Activated CD4-positive, alpha-beta T cell treated with anti-CD3 and anti-CD28 coated beads, Interleukin-2, amount 10 ng/mL, durations not matched to agents 24 days and 14 days (primary cell): ENCODE measurements at regions of chr7 and their contacts with region 1.

Region 1: GRCh38 chr7:137898839-137899721 is 52.3 kb upstream of the DGKI start:
- DNase-seq: peak; percentile 93
- H3K4me3 Mint-ChIP-seq: peak overlapping the region; percentile 62
- H3K27ac Mint-ChIP-seq: peak overlapping the region; percentile 76
- H3K4me1 Mint-ChIP-seq: peaks cover 28% of the 10 kb centered on the region
- H3K27me3 Mint-ChIP-seq: no peaks in the 10 kb centered on the region

Region 2: DNA sequence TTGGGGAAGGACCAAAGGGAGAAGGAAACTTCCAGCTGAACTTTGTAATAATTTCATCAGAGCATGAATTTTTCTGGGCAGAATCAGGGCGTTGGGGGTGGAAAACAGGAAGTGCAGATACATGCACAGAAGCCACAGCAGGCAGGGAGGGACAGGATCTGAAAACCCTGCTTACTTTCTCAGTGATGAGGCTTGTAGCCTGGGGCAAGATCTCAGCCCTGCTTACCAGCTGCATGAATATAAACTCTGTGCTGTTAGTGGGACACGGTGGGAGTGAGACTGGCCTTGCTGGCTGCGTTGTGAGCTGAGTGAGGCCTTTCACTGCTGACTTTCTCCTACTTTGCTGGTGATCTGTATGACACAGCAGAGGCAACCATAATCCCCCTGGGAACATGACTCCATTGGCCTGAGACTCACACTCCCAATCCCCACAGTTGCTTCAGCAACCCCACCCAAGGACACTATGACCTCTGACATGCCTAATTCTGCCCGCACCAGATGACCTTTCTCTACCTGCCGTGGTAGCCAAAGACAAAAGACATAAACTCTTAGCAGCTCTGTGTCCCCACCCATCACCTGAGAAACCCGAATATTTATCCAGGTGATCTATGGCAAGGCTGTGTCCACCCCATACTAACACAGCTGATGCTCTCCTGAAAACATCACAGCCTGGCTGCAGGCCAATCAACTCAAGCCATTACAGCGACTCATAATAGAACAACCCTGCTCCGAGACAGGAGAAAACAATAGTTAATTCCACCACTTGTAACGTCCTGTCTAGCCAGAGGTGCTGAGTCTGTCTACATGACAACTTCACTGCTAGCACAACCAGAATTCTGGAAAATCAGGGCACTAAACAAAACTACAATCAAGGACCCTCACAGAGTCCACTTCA is 1221.4 kb before region 1 on chr7:
- intact Hi-C with region 1: no loop called
- DNase-seq: no peak
- H3K4me3 Mint-ChIP-seq: no peak overlapping the region
- H3K27ac Mint-ChIP-seq: no peak overlapping the region
- H3K4me1 Mint-ChIP-seq: no peaks in the 10 kb centered on the region
- H3K27me3 Mint-ChIP-seq: no peaks in the 10 kb centered on the region

Region 3: DNA sequence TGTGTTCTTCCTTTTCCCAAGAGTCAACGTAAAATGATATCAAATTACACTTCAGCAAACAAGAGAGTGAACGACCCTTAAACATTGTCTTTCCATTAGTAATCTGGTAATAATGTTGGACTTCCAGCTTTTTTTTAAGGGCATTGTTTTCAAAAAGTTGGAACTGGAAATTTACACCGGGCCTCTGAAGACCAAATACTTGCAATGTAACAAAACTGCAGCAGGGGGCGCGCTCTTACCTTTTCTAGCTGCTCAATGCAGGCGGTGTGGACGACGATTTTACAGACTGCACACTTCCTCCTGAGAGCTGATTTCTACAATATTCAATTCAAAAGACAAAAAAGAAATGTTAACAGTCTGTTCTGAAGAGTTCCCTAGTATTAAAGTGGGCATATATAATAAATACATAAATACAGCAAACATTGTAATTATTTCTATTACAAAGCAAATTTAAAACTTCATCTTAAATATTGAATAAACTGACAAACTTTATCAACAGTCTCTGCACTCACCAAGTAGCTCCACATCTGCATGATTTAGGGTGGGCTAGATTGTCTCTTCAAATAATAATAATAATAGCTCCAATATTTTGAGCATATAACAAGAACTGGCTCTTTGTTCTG is 242.7 kb before region 1 on chr7:
- intact Hi-C with region 1: loop called (anchors 1 kb)
- DNase-seq: peak; percentile 89
- H3K4me3 Mint-ChIP-seq: no peak overlapping the region
- H3K27ac Mint-ChIP-seq: no peak overlapping the region
- H3K4me1 Mint-ChIP-seq: no peaks in the 10 kb centered on the region
- H3K27me3 Mint-ChIP-seq: peaks cover 4% of the 10 kb centered on the region

Region 4: DNA sequence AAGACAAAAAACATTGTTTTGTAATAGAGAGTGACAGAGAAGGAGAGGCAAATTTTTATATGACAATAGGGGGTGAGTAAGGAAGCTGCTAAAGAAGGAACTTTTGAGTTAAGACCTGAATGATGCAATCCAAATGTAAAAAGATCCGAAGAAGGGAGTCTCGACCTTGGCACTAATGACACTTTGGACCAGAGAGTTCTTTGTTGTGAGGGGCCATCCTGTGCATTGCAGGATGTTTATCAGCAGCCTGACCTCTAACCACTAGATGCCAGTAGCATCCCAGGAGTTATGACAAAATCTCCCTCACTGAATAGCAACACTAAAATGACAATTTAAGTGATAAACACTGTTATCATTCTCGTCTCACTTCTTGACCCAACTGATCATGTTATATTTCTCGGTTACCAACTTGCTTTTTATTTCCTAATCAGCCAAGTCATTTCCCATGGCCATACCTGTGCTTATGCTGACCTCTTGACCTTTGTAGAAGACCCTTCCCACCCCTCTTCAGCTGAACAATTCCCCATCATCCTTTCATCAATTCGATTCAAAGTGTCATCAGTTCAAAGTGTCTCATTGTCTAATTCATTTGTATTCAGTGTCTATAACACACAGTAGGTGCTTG is 82.3 kb before region 1 on chr7:
- intact Hi-C with region 1: loop called (anchors 2 kb)
- DNase-seq: no peak
- H3K4me3 Mint-ChIP-seq: no peak overlapping the region
- H3K27ac Mint-ChIP-seq: no peak overlapping the region
- H3K4me1 Mint-ChIP-seq: no peaks in the 10 kb centered on the region
- H3K27me3 Mint-ChIP-seq: peaks cover 6% of the 10 kb centered on the region

Region 5: DNA sequence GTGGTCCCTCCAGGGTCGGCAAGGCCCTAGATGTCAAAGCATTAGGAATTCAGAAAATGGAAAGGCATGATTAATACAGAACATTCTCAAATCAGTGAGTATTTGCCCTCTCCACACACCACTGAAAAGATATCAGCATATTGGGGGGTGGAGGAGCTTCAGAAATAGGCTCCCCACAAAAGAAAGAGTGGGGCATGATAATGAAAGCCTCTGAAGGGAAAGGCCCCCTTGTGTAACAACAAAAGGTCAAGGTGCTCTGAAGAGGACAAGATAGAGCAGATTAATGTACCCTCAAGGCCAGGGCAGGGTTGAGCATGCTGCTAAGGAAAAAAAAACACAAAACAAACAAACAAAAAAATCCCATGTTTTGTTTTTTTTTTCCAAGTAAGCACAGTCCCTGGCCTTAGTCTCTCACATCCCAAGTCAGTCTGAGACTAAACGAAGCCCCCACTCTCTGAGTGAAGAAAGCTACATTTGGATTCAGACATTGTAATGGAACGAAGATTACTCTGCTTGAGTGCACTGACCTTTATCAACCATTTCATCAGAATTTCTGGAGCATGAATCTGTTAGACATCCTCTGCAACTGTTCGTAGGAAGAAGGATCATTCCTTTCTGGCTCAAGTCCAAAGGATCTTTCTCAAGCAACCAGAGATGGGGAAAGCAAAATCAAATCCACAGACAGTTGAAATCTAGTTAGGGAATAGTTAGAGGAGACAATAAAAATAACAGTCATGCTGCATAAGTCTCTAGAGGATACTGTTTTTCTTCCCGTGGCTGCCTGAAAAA is 24.9 kb before region 1 on chr7:
- intact Hi-C with region 1: loop called (anchors 1 kb)
- DNase-seq: no peak
- H3K4me3 Mint-ChIP-seq: peak overlapping the region; percentile 13
- H3K27ac Mint-ChIP-seq: peak overlapping the region; percentile 92
- H3K4me1 Mint-ChIP-seq: peaks cover 22% of the 10 kb centered on the region
- H3K27me3 Mint-ChIP-seq: peaks cover 2% of the 10 kb centered on the region

Region 6: GRCh38 chr7:138008547-138009349 is 109.7 kb after region 1 on chr7:
- intact Hi-C with region 1: loop called (anchors 1 kb)
- DNase-seq: peak; percentile 83
- H3K4me3 Mint-ChIP-seq: no peak overlapping the region
- H3K27ac Mint-ChIP-seq: peak overlapping the region; percentile 42
- H3K4me1 Mint-ChIP-seq: peaks cover 6% of the 10 kb centered on the region
- H3K27me3 Mint-ChIP-seq: peaks cover 7% of the 10 kb centered on the region

Region 7: GRCh38 chr7:138350694-138351357 is 451.7 kb after region 1 on chr7:
- intact Hi-C with region 1: no loop called
- DNase-seq: no peak
- H3K4me3 Mint-ChIP-seq: no peak overlapping the region
- H3K27ac Mint-ChIP-seq: no peak overlapping the region
- H3K4me1 Mint-ChIP-seq: no peaks in the 10 kb centered on the region
- H3K27me3 Mint-ChIP-seq: no peaks in the 10 kb centered on the region

Region 8: DNA sequence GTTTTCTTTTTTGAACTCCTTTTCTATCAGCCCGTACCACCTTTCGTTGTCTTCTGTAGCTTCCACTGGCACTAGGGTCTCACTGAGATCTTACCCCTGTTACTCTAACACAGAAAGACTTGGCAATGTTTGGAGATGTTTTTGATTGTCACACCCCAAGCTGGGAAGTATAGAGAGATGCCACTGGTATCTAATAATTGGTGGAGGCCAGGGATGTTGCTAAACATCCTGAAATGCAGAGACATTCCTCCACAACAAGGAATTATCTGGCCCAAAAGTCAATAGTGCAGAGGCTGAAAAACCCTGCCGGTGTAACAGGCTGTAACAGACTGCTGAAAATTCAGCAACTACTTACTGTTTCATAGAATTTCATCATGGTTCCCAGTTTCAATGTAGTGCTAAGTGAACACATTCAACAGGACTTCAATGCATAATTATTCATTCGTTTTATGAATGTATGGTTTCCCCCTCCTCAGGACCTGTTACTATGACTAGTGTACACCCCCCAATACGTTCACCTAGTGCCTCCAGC is 676.9 kb after region 1 on chr7:
- intact Hi-C with region 1: no loop called
- DNase-seq: no peak
- H3K4me3 Mint-ChIP-seq: no peak overlapping the region
- H3K27ac Mint-ChIP-seq: no peak overlapping the region
- H3K4me1 Mint-ChIP-seq: no peaks in the 10 kb centered on the region
- H3K27me3 Mint-ChIP-seq: no peaks in the 10 kb centered on the region

Region 9: DNA sequence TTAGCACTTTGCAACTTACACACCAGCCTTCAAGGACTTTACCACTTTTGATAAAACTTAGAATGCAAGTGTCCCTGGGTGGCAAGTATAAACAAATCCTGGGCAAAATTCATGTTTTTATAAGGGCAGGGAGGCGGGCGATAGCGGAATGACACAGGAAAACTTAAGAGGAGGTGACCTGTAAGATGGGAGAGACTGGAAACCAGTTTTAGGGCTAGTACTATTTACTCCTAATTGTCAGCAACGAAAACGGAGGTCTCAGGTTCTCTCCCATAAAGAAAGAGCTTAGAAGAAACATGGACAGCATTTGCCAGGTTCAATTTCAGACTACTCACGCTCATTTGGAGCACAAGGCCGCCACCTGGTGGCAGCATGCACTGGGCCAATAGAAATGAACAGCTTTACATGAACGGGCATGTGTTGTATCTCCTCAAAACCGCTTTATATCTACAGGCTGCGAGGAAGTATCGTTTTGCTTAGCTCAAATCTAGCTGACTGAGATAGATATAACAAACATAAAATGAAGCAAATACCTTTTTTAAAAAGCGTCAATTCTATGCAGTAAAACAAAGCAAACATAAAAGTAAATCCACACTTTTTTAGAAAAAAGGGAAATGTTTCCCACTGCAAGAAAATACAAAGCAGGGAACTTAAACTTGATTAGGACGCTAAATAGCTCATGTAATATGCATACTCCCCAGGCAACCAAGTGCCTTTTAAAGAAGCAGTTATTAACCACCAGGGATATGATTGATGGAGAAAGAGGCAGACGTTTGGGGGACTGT is 839.7 kb after region 1 on chr7:
- intact Hi-C with region 1: loop called (anchors 5 kb)
- DNase-seq: peak; percentile 94
- H3K4me3 Mint-ChIP-seq: no peak overlapping the region
- H3K27ac Mint-ChIP-seq: no peak overlapping the region
- H3K4me1 Mint-ChIP-seq: peaks cover 10% of the 10 kb centered on the region
- H3K27me3 Mint-ChIP-seq: peaks cover 7% of the 10 kb centered on the region